ENCODE measurements at regions of chr9 and their contacts with region 1.

Region 1: DNA sequence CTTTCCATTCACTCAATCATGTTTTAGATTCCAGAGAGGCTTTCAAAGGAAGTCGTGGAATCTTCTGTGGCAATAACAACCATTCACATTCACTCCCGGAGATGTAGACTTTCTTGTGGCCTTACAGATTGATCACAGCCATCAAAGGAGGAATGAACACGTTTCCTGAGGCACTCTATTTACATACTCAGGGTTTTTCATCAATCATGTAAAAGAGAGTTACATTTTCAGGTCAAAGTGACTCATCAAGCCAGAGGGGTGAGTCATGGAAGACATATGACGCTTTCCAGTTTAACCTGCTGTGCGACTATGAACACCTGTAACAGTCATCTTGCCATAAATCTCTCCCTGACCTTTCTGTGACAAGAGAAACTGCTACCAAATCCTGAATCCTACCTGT is 39.3 kb upstream of the RAD23B start:
- DNase-seq: no peak
- ATAC-seq: peak; percentile 68
- H3K4me3 Mint-ChIP-seq: no peak overlapping the region
- H3K27ac Mint-ChIP-seq: no peak overlapping the region
- H3K4me1 Mint-ChIP-seq: peaks cover 18% of the 10 kb centered on the region
- H3K27me3 Mint-ChIP-seq: peaks cover 4% of the 10 kb centered on the region
- CTCF ChIP-seq: no peak

Region 2: GRCh38 chr9:107218829-107219485 is 24.8 kb before region 1 on chr9:
- CTCF ChIA-PET with region 1: no interaction called
- POLR2A ChIA-PET with region 1: no interaction called
- intact Hi-C with region 1: loop called (anchors 2 kb)
- DNase-seq: no peak
- ATAC-seq: peak; percentile 87
- H3K4me3 Mint-ChIP-seq: no peak overlapping the region
- H3K27ac Mint-ChIP-seq: no peak overlapping the region
- H3K4me1 Mint-ChIP-seq: peaks cover 12% of the 10 kb centered on the region
- H3K27me3 Mint-ChIP-seq: peaks cover 8% of the 10 kb centered on the region
- CTCF ChIP-seq: no peak

Region 3: DNA sequence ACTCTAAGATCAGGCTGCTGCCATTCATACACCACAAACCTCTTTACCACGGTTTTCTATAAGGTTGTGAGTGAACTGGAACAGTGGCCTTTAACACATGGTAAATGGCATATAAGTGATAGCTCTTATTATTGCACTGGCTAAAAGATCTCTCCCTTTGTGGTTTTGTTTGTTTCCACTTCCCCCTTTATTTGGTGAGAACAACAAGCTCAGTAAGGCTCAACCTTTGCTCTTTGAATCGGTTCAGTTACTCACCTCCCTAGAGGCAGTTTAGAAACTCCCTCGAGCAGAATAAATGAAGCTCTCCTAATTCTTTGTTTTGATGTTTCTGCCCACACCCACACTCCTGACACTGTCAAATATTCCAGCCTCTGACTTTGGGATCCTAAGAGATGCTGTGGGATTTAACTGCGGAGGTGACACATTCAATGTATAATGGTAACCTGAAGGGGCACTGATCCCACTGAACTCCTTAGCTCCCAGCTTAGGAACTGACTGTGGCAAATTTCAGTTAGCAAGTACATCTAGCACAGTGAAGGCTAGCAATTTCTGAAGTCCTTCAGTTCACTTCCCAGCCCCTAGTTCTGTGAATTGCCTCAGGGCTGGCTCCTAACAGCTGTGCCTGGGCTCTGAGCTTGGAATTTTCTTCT is 16.8 kb after region 1 on chr9:
- CTCF ChIA-PET with region 1: interaction called, 19 read pairs
- POLR2A ChIA-PET with region 1: interaction called, 3 read pairs
- intact Hi-C with region 1: loop called (anchors 1 kb)
- DNase-seq: peak; percentile 17
- ATAC-seq: peak; percentile 98
- H3K4me3 Mint-ChIP-seq: peak overlapping the region; percentile 53
- H3K27ac Mint-ChIP-seq: peak overlapping the region; percentile 67
- H3K4me1 Mint-ChIP-seq: peaks cover 26% of the 10 kb centered on the region
- H3K27me3 Mint-ChIP-seq: peaks cover 3% of the 10 kb centered on the region
- CTCF ChIP-seq: no peak

Region 4: GRCh38 chr9:107299437-107299836 is 55.7 kb after region 1 on chr9:
- CTCF ChIA-PET with region 1: interaction called, 23 read pairs
- POLR2A ChIA-PET with region 1: no interaction called
- intact Hi-C with region 1: loop called (anchors 1 kb)
- DNase-seq: no peak
- ATAC-seq: peak; percentile 5
- H3K4me3 Mint-ChIP-seq: no peak overlapping the region
- H3K27ac Mint-ChIP-seq: no peak overlapping the region
- H3K4me1 Mint-ChIP-seq: peaks cover 38% of the 10 kb centered on the region
- H3K27me3 Mint-ChIP-seq: no peaks in the 10 kb centered on the region
- CTCF ChIP-seq: no peak

Region 5: GRCh38 chr9:107355394-107355793 is 111.6 kb after region 1 on chr9:
- CTCF ChIA-PET with region 1: no interaction called
- POLR2A ChIA-PET with region 1: no interaction called
- intact Hi-C with region 1: no loop called
- DNase-seq: no peak
- ATAC-seq: no peak
- H3K4me3 Mint-ChIP-seq: no peak overlapping the region
- H3K27ac Mint-ChIP-seq: no peak overlapping the region
- H3K4me1 Mint-ChIP-seq: no peaks in the 10 kb centered on the region
- H3K27me3 Mint-ChIP-seq: peaks cover 3% of the 10 kb centered on the region
- CTCF ChIP-seq: no peak

Region 6: DNA sequence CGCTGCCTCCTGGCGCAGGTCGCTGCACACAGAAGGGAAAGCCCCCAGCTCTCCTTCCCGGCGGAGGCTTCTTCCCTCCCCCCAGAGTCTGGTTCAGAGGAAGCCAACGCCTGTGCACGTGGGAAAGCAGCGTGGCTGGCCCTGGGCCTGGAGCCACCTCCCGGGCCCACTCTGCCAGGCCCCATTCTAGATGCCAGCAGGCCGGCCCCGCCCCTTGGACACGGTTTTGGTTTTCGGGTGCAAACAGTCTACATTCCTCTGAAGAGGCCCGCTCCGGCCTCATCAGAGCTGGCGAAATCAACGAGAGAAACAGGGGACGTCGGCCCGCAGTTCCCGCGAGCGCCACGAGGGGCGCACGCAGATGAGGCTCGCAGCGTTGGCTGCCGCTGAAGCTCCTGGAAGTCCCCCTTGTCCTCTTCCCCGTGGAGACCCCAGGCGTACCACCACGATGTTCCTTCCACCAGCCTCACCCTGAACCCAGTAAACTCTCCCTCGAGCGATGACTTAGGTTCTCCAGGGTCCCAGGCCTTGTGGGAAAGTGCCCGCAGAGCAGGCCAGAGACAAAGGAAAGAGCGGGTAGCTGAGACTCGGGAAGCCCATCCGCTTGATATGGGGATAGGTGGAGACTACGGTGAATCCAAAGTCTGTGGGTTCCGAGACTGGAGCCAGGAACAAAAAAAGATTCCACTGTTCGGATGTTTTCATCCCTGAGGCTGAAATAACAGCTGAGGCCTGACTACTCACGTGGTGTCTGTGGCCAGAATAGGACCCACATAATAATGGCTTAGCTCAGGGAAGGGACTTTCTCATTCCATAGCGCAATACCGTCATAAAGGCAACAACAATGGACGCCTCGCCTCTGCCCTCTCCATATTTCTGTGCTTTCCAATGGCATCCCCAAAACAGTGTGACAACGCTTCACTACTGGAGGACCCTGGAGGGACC is 181.6 kb after region 1 on chr9:
- CTCF ChIA-PET with region 1: no interaction called
- POLR2A ChIA-PET with region 1: no interaction called
- intact Hi-C with region 1: loop called (anchors 10 kb)
- DNase-seq: peak; percentile 46
- ATAC-seq: peak; percentile 78
- H3K4me3 Mint-ChIP-seq: peak overlapping the region; percentile 48
- H3K27ac Mint-ChIP-seq: no peak overlapping the region
- H3K4me1 Mint-ChIP-seq: peaks cover 3% of the 10 kb centered on the region
- H3K27me3 Mint-ChIP-seq: peaks cover 15% of the 10 kb centered on the region
- CTCF ChIP-seq: peak; percentile 59

Region 7: GRCh38 chr9:108565651-108566378 is 1322.1 kb after region 1 on chr9:
- CTCF ChIA-PET with region 1: interaction called, 6 read pairs
- POLR2A ChIA-PET with region 1: no interaction called
- intact Hi-C with region 1: loop called (anchors 2 kb)
- DNase-seq: no peak
- ATAC-seq: no peak
- H3K4me3 Mint-ChIP-seq: no peak overlapping the region
- H3K27ac Mint-ChIP-seq: no peak overlapping the region
- H3K4me1 Mint-ChIP-seq: no peaks in the 10 kb centered on the region
- H3K27me3 Mint-ChIP-seq: peaks cover 6% of the 10 kb centered on the region
- CTCF ChIP-seq: no peak

Region 8: GRCh38 chr9:108761655-108762347 is 1518.0 kb after region 1 on chr9:
- CTCF ChIA-PET with region 1: no interaction called
- POLR2A ChIA-PET with region 1: no interaction called
- intact Hi-C with region 1: loop called (anchors 2 kb)
- DNase-seq: no peak
- ATAC-seq: peak; percentile 40
- H3K4me3 Mint-ChIP-seq: no peak overlapping the region
- H3K27ac Mint-ChIP-seq: no peak overlapping the region
- H3K4me1 Mint-ChIP-seq: peaks cover 9% of the 10 kb centered on the region
- H3K27me3 Mint-ChIP-seq: peaks cover 2% of the 10 kb centered on the region
- CTCF ChIP-seq: peak; percentile 68